ENCODE measurements at regions of chr17 and their contacts with region 1.

Region 1: GRCh38 chr17:8041249-8041928 is 2.5 kb downstream of the ALOX15B start:
- DNase-seq: peak; percentile 29
- H3K4me3 ChIP-seq: no peak overlapping the region
- H3K27ac ChIP-seq: peak overlapping the region; percentile 11
- H3K27me3 ChIP-seq: peaks cover 31% of the 10 kb centered on the region
- CTCF ChIP-seq: peak; percentile 65

Region 2: GRCh38 chr17:7862692-7863437 is 178.5 kb before region 1 on chr17:
- CTCF ChIA-PET with region 1: interaction called, 12 read pairs
- POLR2A ChIA-PET with region 1: no interaction called
- DNase-seq: no peak
- H3K4me3 ChIP-seq: no peak overlapping the region
- H3K27ac ChIP-seq: no peak overlapping the region
- H3K27me3 ChIP-seq: no peaks in the 10 kb centered on the region
- CTCF ChIP-seq: peak; percentile 74

Region 3: DNA sequence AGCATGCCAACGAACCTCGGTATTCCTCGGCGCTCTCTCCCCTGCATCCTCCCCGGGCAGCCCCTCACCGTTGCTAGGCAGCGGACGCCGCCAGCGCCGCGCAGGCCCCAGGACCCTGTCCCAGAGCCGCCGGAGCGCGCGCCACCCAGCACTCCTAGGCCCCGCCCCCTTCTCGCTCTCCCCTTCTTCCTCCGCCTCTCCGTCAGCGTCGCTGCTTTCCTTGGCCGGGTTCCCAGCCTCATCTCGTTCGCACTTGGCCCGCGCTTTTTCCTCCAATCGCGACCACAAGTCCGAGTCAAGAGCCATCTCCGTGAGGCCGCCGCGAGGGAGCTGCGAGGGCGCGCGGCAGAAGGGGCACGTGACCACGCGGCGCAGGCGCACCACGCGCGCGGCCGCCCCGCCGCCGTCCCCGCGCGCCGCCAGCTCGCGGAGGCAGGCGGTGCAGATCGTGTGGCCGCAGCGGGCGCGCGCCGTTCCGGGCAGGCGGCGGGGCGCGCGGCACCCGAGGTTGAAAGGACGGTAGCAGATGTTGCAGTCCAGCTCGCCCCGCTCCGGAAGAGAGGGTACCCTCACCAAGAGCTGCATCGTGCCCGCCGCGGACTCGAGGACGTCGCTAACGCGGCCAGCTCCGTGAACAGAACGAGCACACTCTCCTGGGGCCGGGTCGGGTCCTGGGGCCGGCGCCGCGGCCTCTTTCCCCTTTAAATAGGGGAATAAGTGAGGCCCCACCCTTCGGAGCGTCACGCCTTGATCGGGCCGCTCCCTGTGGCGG is 125.6 kb before region 1 on chr17 and contains the start of gene RNF227:
- CTCF ChIA-PET with region 1: interaction called, 24 read pairs
- POLR2A ChIA-PET with region 1: interaction called, 5 read pairs
- DNase-seq: peak; percentile 92
- H3K4me3 ChIP-seq: peak within 1 kb of the TSS; percentile 74
- H3K27ac ChIP-seq: peak within 1 kb of the TSS; percentile 89
- H3K27me3 ChIP-seq: no peaks in the 10 kb centered on the region
- CTCF ChIP-seq: no peak
- polyA plus RNA-seq, gene RNF227: 1.3 and 1.4 TPM in 2 replicates

Region 4: DNA sequence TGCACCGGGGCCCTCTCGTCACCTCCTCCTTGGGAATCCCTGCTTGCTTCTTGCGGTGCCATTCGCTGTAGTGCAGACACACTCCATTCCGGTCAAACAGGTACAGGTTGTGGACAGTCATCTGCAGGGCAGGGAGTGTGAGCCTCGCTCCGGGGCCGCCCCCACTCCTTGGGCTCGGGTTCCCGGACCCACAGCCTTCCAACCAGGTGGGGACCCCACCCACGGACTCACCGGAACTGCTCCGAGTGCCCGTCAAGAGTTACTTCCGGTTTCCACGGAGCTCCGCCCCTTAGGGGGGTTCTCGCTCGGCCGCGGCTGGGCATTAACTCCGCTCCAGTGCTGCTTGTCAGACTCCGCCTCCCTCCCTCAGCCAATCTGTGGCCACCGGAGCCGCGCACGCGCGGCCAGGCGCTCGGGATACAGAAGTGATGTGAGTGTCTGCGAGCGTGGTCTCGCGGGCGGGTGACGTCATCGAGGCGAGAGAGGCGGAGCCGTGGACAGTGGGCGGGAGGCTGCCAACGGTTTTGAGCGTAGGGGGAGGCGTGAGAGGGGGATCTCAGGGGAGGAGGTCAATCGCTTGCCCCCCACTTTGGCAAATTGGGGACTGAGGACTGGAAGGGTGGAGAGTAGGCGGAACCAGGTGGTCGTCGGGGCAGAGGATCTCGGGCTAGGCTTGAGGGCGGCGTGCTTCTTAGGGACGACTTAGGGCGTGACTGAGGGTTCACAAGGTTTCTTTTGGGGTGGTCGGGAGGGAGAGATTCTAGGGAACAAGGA is 109.5 kb before region 1 on chr17 and contains the starts of genes CNTROB and TRAPPC1:
- CTCF ChIA-PET with region 1: interaction called, 21 read pairs
- POLR2A ChIA-PET with region 1: no interaction called
- DNase-seq: peak; percentile 97
- H3K4me3 ChIP-seq: peak within 1 kb of the TSS; percentile 100
- H3K27ac ChIP-seq: peak within 1 kb of the TSS; percentile 70
- H3K27me3 ChIP-seq: no peaks in the 10 kb centered on the region
- CTCF ChIP-seq: no peak
- polyA plus RNA-seq, gene CNTROB: 11.3 and 12.9 TPM in 2 replicates
- polyA plus RNA-seq, gene TRAPPC1: 202 and 227 TPM in 2 replicates

Region 5: DNA sequence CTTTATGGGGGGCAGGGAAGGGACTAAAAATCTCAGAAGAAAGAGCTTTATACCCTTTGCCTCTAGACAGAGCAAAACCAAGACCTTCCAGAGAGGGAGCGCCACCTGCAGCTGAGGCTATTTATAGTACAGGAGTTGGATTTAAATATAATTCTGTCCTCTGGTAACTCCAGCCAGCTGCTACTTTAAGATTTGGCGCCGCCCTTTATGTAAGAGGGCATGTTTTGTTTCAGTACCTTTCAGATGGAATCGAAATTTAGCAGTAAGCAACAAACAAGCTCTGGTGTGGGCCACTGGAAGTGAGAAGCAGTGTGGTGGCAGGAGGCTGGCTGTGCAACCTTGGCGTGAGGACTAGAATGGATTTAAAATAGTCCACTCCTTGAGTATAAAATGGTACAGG is 44.2 kb before region 1 on chr17:
- CTCF ChIA-PET with region 1: interaction called, 11 read pairs
- POLR2A ChIA-PET with region 1: no interaction called
- DNase-seq: no peak
- H3K4me3 ChIP-seq: no peak overlapping the region
- H3K27ac ChIP-seq: no peak overlapping the region
- H3K27me3 ChIP-seq: peaks cover 36% of the 10 kb centered on the region
- CTCF ChIP-seq: peak; percentile 55

Region 6: DNA sequence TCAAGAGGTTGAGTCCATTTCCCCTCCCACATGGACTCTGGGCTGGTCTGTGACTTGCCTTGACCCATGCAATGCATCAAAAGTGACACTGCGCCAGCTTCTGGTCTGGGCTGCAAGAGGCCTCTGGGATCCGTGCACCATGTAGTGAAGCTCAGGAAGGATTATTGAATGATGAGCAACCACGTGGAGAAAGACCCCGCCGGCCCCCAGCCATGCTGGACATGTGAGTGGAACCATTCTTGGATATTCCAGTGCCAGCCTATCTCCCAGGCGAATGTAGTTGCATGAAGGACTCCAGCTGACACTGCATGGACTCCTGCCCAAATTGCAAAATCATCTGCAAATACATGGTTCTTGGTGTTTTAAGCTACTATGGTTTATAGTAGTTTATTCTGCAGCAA is 10.1 kb before region 1 on chr17:
- CTCF ChIA-PET with region 1: interaction called, 12 read pairs
- POLR2A ChIA-PET with region 1: no interaction called
- DNase-seq: no peak
- H3K4me3 ChIP-seq: no peak overlapping the region
- H3K27ac ChIP-seq: no peak overlapping the region
- H3K27me3 ChIP-seq: peaks cover 25% of the 10 kb centered on the region
- CTCF ChIP-seq: no peak

Region 7: GRCh38 chr17:8091033-8091687 is 49.8 kb after region 1 on chr17:
- CTCF ChIA-PET with region 1: no interaction called
- POLR2A ChIA-PET with region 1: no interaction called
- DNase-seq: no peak
- H3K4me3 ChIP-seq: no peak overlapping the region
- H3K27ac ChIP-seq: no peak overlapping the region
- H3K27me3 ChIP-seq: peaks cover 31% of the 10 kb centered on the region
- CTCF ChIP-seq: no peak